Prostate gland (tissue), 2 donors: ENCODE measurements at regions of chr1 and their contacts with region 1.

Region 1: DNA sequence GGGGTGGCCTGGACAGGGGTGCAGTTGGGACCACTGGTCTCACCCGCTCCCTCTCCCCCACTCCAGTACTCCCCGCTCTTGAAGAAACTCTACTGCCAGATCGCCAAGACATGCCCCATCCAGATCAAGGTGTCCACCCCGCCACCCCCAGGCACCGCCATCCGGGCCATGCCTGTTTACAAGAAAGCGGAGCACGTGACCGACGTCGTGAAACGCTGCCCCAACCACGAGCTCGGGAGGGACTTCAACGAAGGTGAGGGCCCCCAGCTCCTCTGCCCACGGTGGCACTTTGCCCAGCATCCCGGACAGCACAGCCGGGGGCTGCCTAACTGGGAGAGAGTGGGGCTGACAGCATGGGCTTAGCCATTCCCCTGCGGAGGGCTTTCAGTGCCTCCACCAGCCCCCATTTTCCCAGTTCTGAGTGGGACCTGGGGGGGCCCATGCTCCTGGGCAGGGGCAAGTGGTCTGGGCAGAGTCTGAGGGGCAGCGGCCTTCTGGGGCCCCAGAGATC is 30.2 kb upstream of the CCDC27 start:
- DNase-seq: no peak
- H3K4me3 ChIP-seq: no peak overlapping the region
- H3K27ac ChIP-seq: no peak overlapping the region
- H3K4me1 ChIP-seq: no peaks in the 10 kb centered on the region
- H3K27me3 ChIP-seq: peaks cover under 1% of the 10 kb centered on the region
- CTCF ChIP-seq: no peak
- POLR2A ChIP-seq: no peak

Region 2: GRCh38 chr1:3491291-3492246 is 230.4 kb before region 1 on chr1:
- intact Hi-C with region 1: loop called (anchors 5 kb)
- DNase-seq: peak; percentile 73
- H3K4me3 ChIP-seq: no peak overlapping the region
- H3K27ac ChIP-seq: no peak overlapping the region
- H3K4me1 ChIP-seq: no peaks in the 10 kb centered on the region
- H3K27me3 ChIP-seq: no peaks in the 10 kb centered on the region
- CTCF ChIP-seq: peak; percentile 98 to 100 (median 99)
- POLR2A ChIP-seq: no peak

Region 3: GRCh38 chr1:3992103-3992556 is 270.1 kb after region 1 on chr1:
- intact Hi-C with region 1: no loop called
- DNase-seq: no peak
- H3K4me3 ChIP-seq: no peak overlapping the region
- H3K27ac ChIP-seq: no peak overlapping the region
- H3K4me1 ChIP-seq: no peaks in the 10 kb centered on the region
- H3K27me3 ChIP-seq: peaks cover 9% of the 10 kb centered on the region
- CTCF ChIP-seq: no peak
- POLR2A ChIP-seq: no peak